MCF 10A (cell line): ENCODE measurements at regions of chr5 and their contacts with region 1.

Region 1: GRCh38 chr5:148615644-148616275 is 38.6 kb downstream of the HTR4 start:
- DNase-seq: peak; percentile 26
- H3K4me3 Mint-ChIP-seq: no peak overlapping the region
- H3K27ac Mint-ChIP-seq: no peak overlapping the region
- H3K4me1 Mint-ChIP-seq: peaks cover 6% of the 10 kb centered on the region
- H3K27me3 Mint-ChIP-seq: no peaks in the 10 kb centered on the region
- CTCF ChIP-seq: no peak

Region 2: DNA sequence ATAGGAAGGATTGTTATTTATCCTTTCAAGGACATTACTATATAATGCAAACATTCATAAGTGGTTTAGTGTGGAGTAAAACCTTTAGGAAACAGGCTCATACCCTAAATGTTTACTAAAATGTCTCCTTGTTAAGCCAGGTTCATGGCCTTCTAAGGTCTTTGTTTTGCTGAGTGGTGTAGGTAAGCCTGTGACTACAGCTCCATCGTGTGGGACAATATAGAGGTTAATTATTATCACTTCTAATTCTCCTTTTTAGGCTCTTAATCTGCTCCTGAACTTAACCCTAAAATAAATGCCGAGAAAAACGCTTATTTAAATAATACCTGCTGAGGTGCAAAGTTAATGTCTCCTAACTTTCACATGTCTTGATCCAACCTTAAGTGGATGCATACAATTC is 508.2 kb before region 1 on chr5:
- CTCF ChIA-PET with region 1: no interaction called
- POLR2A ChIA-PET with region 1: no interaction called
- intact Hi-C with region 1: no loop called
- DNase-seq: peak; percentile 65
- H3K4me3 Mint-ChIP-seq: no peak overlapping the region
- H3K27ac Mint-ChIP-seq: no peak overlapping the region
- H3K4me1 Mint-ChIP-seq: no peaks in the 10 kb centered on the region
- H3K27me3 Mint-ChIP-seq: no peaks in the 10 kb centered on the region
- CTCF ChIP-seq: peak; percentile 55

Region 3: GRCh38 chr5:148626986-148627385 is 11.2 kb after region 1 on chr5:
- CTCF ChIA-PET with region 1: interaction called, 3 read pairs
- POLR2A ChIA-PET with region 1: interaction called, 12 read pairs
- intact Hi-C with region 1: no loop called
- DNase-seq: no peak
- H3K4me3 Mint-ChIP-seq: no peak overlapping the region
- H3K27ac Mint-ChIP-seq: no peak overlapping the region
- H3K4me1 Mint-ChIP-seq: peaks cover 31% of the 10 kb centered on the region
- H3K27me3 Mint-ChIP-seq: peaks cover 3% of the 10 kb centered on the region
- CTCF ChIP-seq: no peak

Region 4: GRCh38 chr5:148653836-148654781 is 38.3 kb after region 1 on chr5 and contains the start of gene HTR4:
- CTCF ChIA-PET with region 1: no interaction called
- POLR2A ChIA-PET with region 1: no interaction called
- intact Hi-C with region 1: no loop called
- DNase-seq: no peak
- H3K4me3 Mint-ChIP-seq: no peak within 1 kb of the TSS
- H3K27ac Mint-ChIP-seq: no peak within 1 kb of the TSS
- H3K4me1 Mint-ChIP-seq: no peaks in the 10 kb centered on the region
- H3K27me3 Mint-ChIP-seq: peaks cover 85% of the 10 kb centered on the region
- CTCF ChIP-seq: no peak
- total RNA-seq, gene HTR4: not detected in 2 replicates